Right ventricle myocardium inferior (tissue), 1 donor: ENCODE measurements at regions of chr7 and their contacts with region 1.

Region 1: GRCh38 chr7:150404805-150405583 is 25.9 kb downstream of the ZNF775 start:
- DNase-seq: peak; percentile 95
- ATAC-seq: peak; percentile 97

Region 2: GRCh38 chr7:150378853-150379440 is 26.0 kb before region 1 on chr7 and contains the start of gene ZNF775:
- intact Hi-C with region 1: loop called (anchors 2 kb)
- DNase-seq: peak; percentile 99
- ATAC-seq: peak; percentile 98
- total RNA-seq, gene ZNF775: 3.3 TPM

Region 3: DNA sequence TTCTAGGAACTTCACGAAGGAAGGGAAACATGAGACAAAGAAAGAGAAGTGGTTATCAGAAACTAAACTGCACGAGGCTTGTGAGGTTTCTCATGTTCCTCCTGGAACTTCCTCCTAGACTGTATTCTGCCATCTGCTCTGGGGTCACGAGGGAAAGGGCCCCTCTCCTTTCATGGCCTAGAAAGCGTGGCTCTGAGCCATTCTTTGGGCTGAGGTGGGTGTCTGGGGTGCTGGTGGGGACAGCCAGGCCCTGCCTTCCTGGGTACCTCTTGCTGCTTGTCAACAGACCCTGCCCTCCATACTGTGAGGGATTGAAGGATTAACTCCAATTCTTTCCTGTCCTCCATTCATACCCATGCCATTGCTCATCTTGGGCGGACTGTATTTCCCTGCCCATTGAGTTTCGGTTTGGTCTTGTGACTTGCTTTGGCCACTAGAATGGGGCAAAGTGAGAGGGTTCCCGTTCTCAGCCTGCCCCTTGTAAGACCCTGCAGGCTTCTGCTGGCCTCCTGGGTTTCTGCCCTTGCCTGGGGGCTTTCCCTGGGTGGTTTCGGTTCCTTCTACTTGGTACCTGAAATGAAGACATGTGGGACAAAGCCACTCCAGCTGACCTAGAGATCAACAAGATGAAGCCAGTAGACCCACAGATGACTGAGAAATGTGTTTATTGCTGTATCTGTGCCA is 30.5 kb after region 1 on chr7:
- intact Hi-C with region 1: no loop called
- DNase-seq: no peak
- ATAC-seq: peak; percentile 42